ENCODE measurements at regions of chr7 and their contacts with region 1.

Region 1: DNA sequence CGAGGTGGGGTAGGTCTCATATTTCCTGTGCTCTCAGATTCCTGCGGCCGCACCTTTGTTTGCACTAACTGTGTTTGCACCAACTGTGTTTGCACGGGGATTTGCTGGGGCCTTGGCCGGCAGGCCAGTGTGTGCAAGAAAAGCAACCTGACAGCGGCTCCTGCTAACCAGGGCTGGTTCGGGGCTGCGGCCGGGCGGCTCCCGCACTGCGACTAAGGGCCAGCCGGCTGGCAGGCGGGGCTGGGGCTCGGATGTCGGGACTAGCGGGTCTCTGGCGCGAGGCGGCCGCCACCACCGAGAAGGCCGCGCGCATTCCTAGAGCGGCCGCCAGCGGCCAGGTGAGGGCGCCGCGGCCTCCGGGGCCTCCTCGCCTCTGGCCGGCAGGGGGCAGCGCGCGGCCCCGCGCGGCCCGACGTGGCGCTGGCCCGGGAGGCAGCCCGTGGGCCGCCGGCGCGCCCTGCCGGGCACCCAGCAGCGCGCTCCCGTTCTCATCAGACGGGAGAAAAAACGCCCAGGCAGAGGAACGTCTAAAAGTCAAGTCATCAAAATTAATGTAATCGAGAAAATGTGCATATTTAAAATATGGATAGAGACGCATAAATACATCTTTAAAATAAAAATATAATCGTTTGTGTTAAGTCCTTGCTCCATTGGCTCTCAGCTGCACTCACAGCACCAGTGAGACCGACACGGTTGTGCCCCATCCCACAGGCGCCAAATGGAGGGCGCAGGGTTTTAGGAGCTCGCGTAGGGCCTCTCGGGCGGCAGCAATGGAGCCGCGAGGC is 38.5 kb downstream of the ZNF777 start:
- DNase-seq: peak; percentile 85
- ATAC-seq: peak; percentile 97
- H3K4me3 ChIP-seq: peak overlapping the region; percentile 61
- H3K27ac ChIP-seq: no peak overlapping the region
- H3K4me1 ChIP-seq: peaks cover 5% of the 10 kb centered on the region; the same call in 1 of the 2 replicates
- H3K27me3 ChIP-seq: no peaks in the 10 kb centered on the region
- CTCF ChIP-seq: peak; percentile 45

Region 2: GRCh38 chr7:149125863-149126661 is 296.3 kb before region 1 on chr7 and contains the start of gene ZNF425:
- CTCF ChIA-PET with region 1: interaction called, 12 read pairs
- POLR2A ChIA-PET with region 1: no interaction called
- intact Hi-C with region 1: no loop called
- DNase-seq: peak; percentile 94
- ATAC-seq: peak; percentile 83
- H3K4me3 ChIP-seq: peak within 1 kb of the TSS; percentile 100
- H3K27ac ChIP-seq: peak within 1 kb of the TSS; percentile 57
- H3K4me1 ChIP-seq: peaks cover 5% of the 10 kb centered on the region
- H3K27me3 ChIP-seq: no peaks in the 10 kb centered on the region
- CTCF ChIP-seq: peak; percentile 82
- total RNA-seq, gene ZNF425: 1.6 and 2.0 TPM in 2 replicates

Region 3: DNA sequence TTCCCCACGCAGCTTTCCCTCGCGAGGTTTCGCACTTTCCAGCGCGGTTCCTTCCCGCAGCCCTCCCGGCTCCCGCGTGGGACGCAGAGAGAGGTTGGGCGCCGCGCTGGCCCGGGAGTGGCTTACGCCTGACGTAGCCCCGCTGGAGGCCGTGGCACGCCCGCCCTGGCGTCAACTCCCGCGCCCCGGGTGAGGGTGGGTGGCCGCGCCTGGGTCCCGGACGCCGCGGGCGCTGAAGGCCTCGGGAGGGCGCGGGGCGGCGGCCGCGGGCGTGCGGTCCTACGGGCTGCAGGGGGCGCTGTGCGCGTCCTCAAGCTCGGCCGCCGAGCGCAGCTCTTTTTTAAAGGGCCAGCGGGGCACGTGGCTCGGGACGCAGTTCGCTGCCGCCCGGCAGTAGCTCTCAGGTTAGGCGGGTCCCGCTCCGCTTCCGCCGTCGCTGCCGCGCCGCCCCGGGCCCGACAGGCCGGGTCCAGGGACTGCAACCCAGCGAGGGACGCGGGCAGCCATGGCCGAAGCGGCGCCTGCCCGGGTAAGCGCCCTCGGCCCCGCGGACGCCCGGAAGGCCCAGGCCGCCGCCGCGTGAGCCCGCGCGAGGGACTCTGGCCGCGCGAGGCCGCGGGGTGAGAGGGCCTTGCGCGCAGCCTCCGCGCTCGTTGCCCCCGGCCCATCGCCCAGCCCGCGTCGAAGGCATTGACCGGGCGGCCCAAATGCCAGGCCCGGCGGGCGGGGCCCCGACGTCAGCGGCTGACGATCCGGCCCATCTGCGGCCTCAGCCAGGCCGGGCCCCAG is 160.3 kb before region 1 on chr7 and contains the start of gene ZNF783:
- CTCF ChIA-PET with region 1: no interaction called
- POLR2A ChIA-PET with region 1: no interaction called
- intact Hi-C with region 1: loop called (anchors 1 kb)
- DNase-seq: peak; percentile 85
- ATAC-seq: peak; percentile 90
- H3K4me3 ChIP-seq: peak within 1 kb of the TSS; percentile 69
- H3K27ac ChIP-seq: peak within 1 kb of the TSS; percentile 82
- H3K4me1 ChIP-seq: peaks cover 18% of the 10 kb centered on the region
- H3K27me3 ChIP-seq: no peaks in the 10 kb centered on the region
- CTCF ChIP-seq: peak; percentile 62
- total RNA-seq, gene ZNF783: 6.9 and 7.0 TPM in 2 replicates

Region 4: DNA sequence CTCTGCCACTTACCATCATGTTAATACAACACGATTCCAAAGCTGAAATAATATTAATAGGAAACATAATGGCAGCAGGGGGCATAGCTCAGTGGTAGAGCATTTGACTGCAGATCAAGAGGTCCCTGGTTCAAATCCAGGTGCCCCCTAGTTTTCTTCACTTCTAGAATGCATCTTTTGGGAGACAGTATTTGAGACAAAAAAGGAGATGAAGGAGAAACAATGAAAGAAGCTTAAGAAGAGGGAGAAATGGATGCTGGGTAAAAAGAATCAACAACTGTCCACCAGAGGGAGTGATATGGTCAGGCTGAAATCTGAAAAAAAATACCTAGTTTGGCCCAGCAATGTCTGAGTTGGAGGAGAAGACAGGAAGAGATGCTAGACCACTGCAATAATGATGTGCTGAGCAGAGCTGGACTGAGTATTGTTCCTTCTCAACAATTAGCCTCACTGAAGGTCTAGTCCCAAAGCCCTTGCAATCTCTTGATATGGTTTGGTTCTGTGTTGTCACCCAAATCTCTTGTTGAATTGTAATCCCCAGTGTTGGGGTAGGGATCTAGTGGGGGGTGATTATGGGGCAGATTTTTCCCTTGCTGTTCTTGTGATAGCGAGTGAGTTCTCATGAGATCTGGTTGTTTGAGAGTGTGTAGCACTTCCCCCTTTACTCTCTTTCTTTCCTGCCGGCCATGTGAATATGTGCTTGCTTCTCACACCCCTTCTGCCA is 112.0 kb before region 1 on chr7:
- CTCF ChIA-PET with region 1: no interaction called
- POLR2A ChIA-PET with region 1: no interaction called
- intact Hi-C with region 1: loop called (anchors 1 kb)
- DNase-seq: peak; percentile 80
- ATAC-seq: peak; percentile 90
- H3K4me3 ChIP-seq: no peak overlapping the region
- H3K27ac ChIP-seq: no peak overlapping the region
- H3K4me1 ChIP-seq: no peaks in the 10 kb centered on the region
- H3K27me3 ChIP-seq: no peaks in the 10 kb centered on the region
- CTCF ChIP-seq: peak; percentile 78

Region 5: GRCh38 chr7:149460493-149461277 is 38.4 kb after region 1 on chr7 and contains the start of gene ZNF777:
- CTCF ChIA-PET with region 1: no interaction called
- POLR2A ChIA-PET with region 1: no interaction called
- intact Hi-C with region 1: loop called (anchors 1 kb)
- DNase-seq: peak; percentile 78
- ATAC-seq: peak; percentile 95
- H3K4me3 ChIP-seq: peak within 1 kb of the TSS; percentile 96
- H3K27ac ChIP-seq: no peak within 1 kb of the TSS
- H3K4me1 ChIP-seq: peaks cover 15% of the 10 kb centered on the region; the same call in 1 of the 2 replicates
- H3K27me3 ChIP-seq: no peaks in the 10 kb centered on the region
- CTCF ChIP-seq: peak; percentile 53
- total RNA-seq, gene ZNF777: 9.9 and 10.3 TPM in 2 replicates

Region 6: DNA sequence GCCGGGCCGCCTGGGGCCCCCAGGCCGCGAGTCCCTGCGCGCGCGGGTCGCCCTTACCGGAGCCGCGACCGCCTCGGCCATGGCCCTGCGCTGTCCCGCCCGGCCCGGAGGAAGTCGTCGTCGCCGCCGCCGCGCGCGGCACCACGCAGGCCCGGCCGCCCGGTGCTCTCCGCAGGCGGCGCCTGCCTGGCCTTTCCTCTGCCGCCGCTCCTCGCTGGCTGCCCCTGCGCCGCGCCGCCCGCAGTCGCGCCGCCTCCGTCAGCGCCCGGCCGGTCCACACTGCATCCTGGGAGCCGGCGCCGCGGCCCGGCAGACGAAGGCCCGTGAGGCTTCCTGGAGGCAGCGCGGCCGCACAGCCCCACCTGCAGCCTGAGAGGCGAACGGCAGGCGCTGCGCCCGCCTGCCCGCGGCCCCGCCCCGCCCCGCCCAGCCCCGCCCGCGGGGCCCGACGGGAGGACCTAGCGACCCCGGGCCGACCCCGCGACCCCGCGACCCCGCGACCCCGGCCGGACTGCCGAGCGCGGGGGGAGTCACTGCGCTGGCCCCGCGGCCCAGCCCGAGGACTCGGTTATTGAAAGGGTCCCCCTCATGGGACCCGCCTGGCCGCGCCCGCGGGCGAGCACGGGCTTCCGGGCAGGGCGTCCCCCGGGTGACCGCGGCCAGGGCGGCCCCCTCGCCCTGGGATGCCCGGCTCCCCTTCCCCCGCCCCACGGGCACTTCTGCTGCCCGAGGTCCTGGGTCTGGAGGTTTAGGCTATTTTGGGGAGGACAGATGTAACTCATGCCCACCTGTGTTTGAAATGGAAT is 75.3 kb after region 1 on chr7 and contains the start of gene ZNF746:
- CTCF ChIA-PET with region 1: no interaction called
- POLR2A ChIA-PET with region 1: no interaction called
- intact Hi-C with region 1: loop called (anchors 2 kb)
- DNase-seq: peak; percentile 79
- ATAC-seq: peak; percentile 90
- H3K4me3 ChIP-seq: peak within 1 kb of the TSS; percentile 82
- H3K27ac ChIP-seq: no peak within 1 kb of the TSS
- H3K4me1 ChIP-seq: peaks cover 16% of the 10 kb centered on the region
- H3K27me3 ChIP-seq: no peaks in the 10 kb centered on the region
- CTCF ChIP-seq: peak; percentile 21; the same call in 1 of the 2 replicates
- total RNA-seq, gene ZNF746: 19.6 and 27.4 TPM in 2 replicates

Region 7: GRCh38 chr7:149624419-149625339 is 202.4 kb after region 1 on chr7:
- CTCF ChIA-PET with region 1: no interaction called
- POLR2A ChIA-PET with region 1: no interaction called
- intact Hi-C with region 1: loop called (anchors 10 kb)
- DNase-seq: peak; percentile 88
- ATAC-seq: peak; percentile 94
- H3K4me3 ChIP-seq: peak overlapping the region; percentile 99
- H3K27ac ChIP-seq: no peak overlapping the region
- H3K4me1 ChIP-seq: peaks cover 17% of the 10 kb centered on the region
- H3K27me3 ChIP-seq: peaks cover 8% of the 10 kb centered on the region
- CTCF ChIP-seq: peak; percentile 74

Measured in PC-3 (cell line).